ENCODE measurements at regions of chr4 and their contacts with region 1.

Region 1: GRCh38 chr4:92760433-92760832 is 456.7 kb downstream of the GRID2 start:
- DNase-seq: no peak
- H3K4me3 ChIP-seq: no peak overlapping the region
- H3K27ac ChIP-seq: no peak overlapping the region
- H3K4me1 ChIP-seq: no peaks in the 10 kb centered on the region
- H3K27me3 ChIP-seq: no peaks in the 10 kb centered on the region
- CTCF ChIP-seq: no peak
- POLR2A ChIP-seq: no peak

Region 2: GRCh38 chr4:91099666-91100065 is 1660.8 kb before region 1 on chr4:
- intact Hi-C with region 1: loop called (anchors 5 kb)
- DNase-seq: no peak
- H3K4me3 ChIP-seq: no peak overlapping the region
- H3K27ac ChIP-seq: no peak overlapping the region
- H3K4me1 ChIP-seq: no peaks in the 10 kb centered on the region
- H3K27me3 ChIP-seq: no peaks in the 10 kb centered on the region
- CTCF ChIP-seq: no peak
- POLR2A ChIP-seq: no peak

Measured in breast epithelium (tissue), 4 donors.